Activated naive CD4-positive, alpha-beta T cell treated with anti-CD3 and anti-CD28 coated beads for 36 hours (primary cell): ENCODE measurements at regions of chr9 and their contacts with region 1.

Region 1: DNA sequence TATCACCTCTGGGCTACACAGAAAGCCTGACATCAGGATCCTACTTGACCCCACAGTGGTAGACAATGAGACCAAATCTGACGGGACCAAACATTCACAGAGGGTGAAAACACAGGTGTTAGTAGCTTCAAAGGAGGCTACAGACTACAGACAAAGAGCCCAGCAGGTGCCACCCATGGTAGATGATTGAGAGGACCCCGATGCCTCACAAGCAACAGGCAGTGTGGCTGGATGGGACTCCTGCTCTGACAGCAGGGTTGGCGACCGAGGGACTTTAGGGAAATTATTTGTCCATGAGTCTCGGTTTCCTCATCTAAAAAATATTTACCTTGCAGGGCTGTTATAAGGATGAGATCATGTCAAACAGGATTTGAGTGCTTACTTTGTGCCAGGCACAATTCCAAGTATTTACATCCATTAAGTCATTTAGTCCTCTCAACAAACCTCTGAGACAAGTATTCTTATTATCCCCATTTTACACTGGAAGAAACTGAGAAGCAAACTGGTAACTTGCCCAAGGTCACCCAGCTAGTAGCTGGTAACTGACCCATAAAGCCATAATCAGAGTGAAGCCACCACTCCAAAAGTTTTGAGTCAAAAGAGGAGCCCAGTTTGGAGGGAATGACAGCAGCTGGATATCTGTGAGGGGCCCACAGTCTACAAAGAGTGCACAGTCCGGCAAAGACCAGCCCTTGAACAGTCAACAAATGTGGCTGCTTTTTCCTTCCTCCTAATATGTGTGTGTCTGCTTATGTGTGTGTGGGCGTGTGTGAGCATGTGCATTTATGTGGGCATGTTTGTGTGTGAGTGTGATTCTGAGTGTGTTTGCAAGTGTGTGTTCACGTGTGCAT is 502.0 kb downstream of the BNC2 start:
- DNase-seq: no peak
- H3K4me3 Mint-ChIP-seq: no peak overlapping the region
- H3K27ac Mint-ChIP-seq: no peak overlapping the region
- H3K4me1 Mint-ChIP-seq: no peaks in the 10 kb centered on the region
- H3K27me3 Mint-ChIP-seq: no peaks in the 10 kb centered on the region

Region 2: GRCh38 chr9:16425562-16426231 is 57.2 kb after region 1 on chr9:
- CTCF ChIA-PET with region 1: no interaction called
- intact Hi-C with region 1: loop called (anchors 10 kb)
- DNase-seq: no peak
- H3K4me3 Mint-ChIP-seq: no peak overlapping the region
- H3K27ac Mint-ChIP-seq: no peak overlapping the region
- H3K4me1 Mint-ChIP-seq: no peaks in the 10 kb centered on the region
- H3K27me3 Mint-ChIP-seq: no peaks in the 10 kb centered on the region